CD14-positive monocyte (primary cell): ENCODE measurements at regions of chr4 and their contacts with region 1.

Region 1: DNA sequence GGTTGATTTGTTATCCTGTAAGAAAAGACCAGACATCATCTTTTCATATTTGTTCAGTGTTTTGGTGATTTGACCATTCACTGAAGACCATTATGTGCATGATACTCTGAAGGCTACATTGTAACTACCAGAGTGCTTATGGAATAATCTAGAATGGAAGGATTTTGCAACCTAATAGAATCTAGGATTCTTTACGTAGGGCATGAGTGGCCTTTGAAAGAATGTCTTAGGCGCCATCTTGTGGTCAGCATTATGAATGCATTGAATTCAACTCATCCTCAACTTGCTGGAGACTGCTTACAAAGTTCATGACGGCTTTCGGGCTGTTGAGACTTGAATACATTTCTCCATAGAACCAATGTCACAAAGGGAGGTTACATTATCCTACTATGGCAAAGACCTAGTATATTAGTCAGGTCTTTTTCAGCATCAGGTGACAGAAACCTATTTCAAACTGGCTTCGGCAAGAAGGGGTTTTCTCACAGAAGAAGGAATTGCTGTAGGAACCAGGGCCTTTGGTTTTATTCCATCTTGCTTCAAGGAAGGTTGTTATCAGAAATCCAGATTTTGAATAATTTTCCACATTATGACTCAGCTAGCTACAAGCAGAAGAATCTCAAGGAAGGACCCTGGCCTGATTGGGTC is 104.1 kb downstream of the GPAT3 start:
- DNase-seq: peak; percentile 58 to 80 (median 72)
- H3K4me3 ChIP-seq: no peak overlapping the region
- H3K4me3 Mint-ChIP-seq: peak overlapping the region in 1 of 2 donors; percentile 49
- H3K27ac ChIP-seq: no peak overlapping the region
- H3K27ac Mint-ChIP-seq: no peak overlapping the region
- H3K4me1 ChIP-seq: no peaks in the 10 kb centered on the region
- H3K4me1 Mint-ChIP-seq: peaks cover 7% of the 10 kb centered on the region
- H3K27me3 ChIP-seq: peaks cover 0 to 4% of the 10 kb centered on the region in 2 donors
- H3K27me3 Mint-ChIP-seq: peaks cover 6 to 11% (median 9%) of the 10 kb centered on the region in 3 donors
- CTCF ChIP-seq: peak; percentile 88

Region 2: GRCh38 chr4:83334425-83335241 is 305.3 kb before region 1 on chr4 and contains the start of gene HPSE:
- intact Hi-C with region 1: no loop called
- DNase-seq: peak; percentile 67 to 73 (median 70)
- H3K4me3 ChIP-seq: peak within 1 kb of the TSS; percentile 69 to 86 (median 73)
- H3K4me3 Mint-ChIP-seq: peak within 1 kb of the TSS; percentile 90 to 93
- H3K27ac ChIP-seq: peak within 1 kb of the TSS; percentile 60 to 72
- H3K27ac Mint-ChIP-seq: peak within 1 kb of the TSS; percentile 70 to 92 (median 85)
- H3K4me1 ChIP-seq: peaks cover 53 to 60% of the 10 kb centered on the region in 2 donors
- H3K4me1 Mint-ChIP-seq: peaks cover 57% of the 10 kb centered on the region
- H3K27me3 ChIP-seq: no peaks in the 10 kb centered on the region
- H3K27me3 Mint-ChIP-seq: peaks cover 1 to 6% (median 2%) of the 10 kb centered on the region in 3 donors
- CTCF ChIP-seq: no peak
- polyA plus RNA-seq, gene HPSE: 21.2 to 65.8 (median 31.2) TPM

Region 3: DNA sequence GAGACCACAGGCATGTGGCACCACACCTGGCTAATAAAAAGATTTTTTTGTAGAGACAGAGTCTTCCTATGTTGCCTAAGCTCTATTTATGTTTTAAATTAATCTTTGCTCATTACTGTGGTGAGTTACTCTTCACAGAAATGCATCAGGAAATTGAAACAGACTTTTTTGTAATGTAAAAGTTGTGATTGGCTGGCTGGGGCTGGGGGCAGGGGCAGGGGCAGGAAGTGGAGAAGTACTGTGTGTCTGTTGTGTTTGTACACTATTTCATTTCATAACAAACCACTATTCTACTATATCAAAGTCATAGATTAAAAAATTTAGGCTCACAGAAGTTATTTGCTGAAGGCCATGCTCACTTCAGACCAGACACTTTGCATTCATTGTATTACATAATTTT is 136.0 kb before region 1 on chr4:
- intact Hi-C with region 1: loop called (anchors 1 to 2 kb)
- DNase-seq: no peak
- H3K4me3 ChIP-seq: no peak overlapping the region
- H3K4me3 Mint-ChIP-seq: no peak overlapping the region
- H3K27ac ChIP-seq: no peak overlapping the region
- H3K27ac Mint-ChIP-seq: no peak overlapping the region
- H3K4me1 ChIP-seq: peaks cover 0 to 3% of the 10 kb centered on the region in 2 donors
- H3K4me1 Mint-ChIP-seq: peaks cover 16% of the 10 kb centered on the region
- H3K27me3 ChIP-seq: no peaks in the 10 kb centered on the region
- H3K27me3 Mint-ChIP-seq: peaks cover 0 to 2% (median 0%) of the 10 kb centered on the region in 3 donors
- CTCF ChIP-seq: no peak

Region 4: GRCh38 chr4:83569987-83570386 is 70.0 kb before region 1 on chr4:
- intact Hi-C with region 1: loop called in 1 of 2 experiments (anchors 10 kb)
- DNase-seq: peak; percentile 89 to 97 (median 96)
- H3K4me3 ChIP-seq: peak overlapping the region in 2 of 3 experiments; percentile 48 to 65
- H3K4me3 Mint-ChIP-seq: peak overlapping the region; percentile 62 to 89
- H3K27ac ChIP-seq: peak overlapping the region; percentile 87 to 89
- H3K27ac Mint-ChIP-seq: peak overlapping the region; percentile 91 to 99 (median 98)
- H3K4me1 ChIP-seq: peaks cover 37 to 50% of the 10 kb centered on the region in 2 donors
- H3K4me1 Mint-ChIP-seq: peaks cover 48% of the 10 kb centered on the region
- H3K27me3 ChIP-seq: no peaks in the 10 kb centered on the region
- H3K27me3 Mint-ChIP-seq: peaks cover 0 to 1% (median 0%) of the 10 kb centered on the region in 3 donors
- CTCF ChIP-seq: no peak

Region 5: GRCh38 chr4:83609365-83609764 is 30.6 kb before region 1 on chr4:
- intact Hi-C with region 1: no loop called
- DNase-seq: no peak
- H3K4me3 ChIP-seq: no peak overlapping the region
- H3K4me3 Mint-ChIP-seq: no peak overlapping the region
- H3K27ac ChIP-seq: no peak overlapping the region
- H3K27ac Mint-ChIP-seq: no peak overlapping the region
- H3K4me1 ChIP-seq: peaks cover 10 to 15% of the 10 kb centered on the region in 2 donors
- H3K4me1 Mint-ChIP-seq: peaks cover 15% of the 10 kb centered on the region
- H3K27me3 ChIP-seq: no peaks in the 10 kb centered on the region
- H3K27me3 Mint-ChIP-seq: peaks cover 0 to 4% (median 2%) of the 10 kb centered on the region in 3 donors
- CTCF ChIP-seq: no peak

Region 6: GRCh38 chr4:84503495-84504437 is 863.8 kb after region 1 on chr4:
- intact Hi-C with region 1: loop called in 1 of 2 experiments (anchors 10 kb)
- DNase-seq: peak; percentile 22 to 56 (median 48)
- H3K4me3 ChIP-seq: no peak overlapping the region
- H3K4me3 Mint-ChIP-seq: peak overlapping the region in 1 of 2 donors; percentile 83
- H3K27ac ChIP-seq: no peak overlapping the region
- H3K27ac Mint-ChIP-seq: no peak overlapping the region
- H3K4me1 ChIP-seq: peaks cover 12% of the 10 kb centered on the region in 2 donors
- H3K4me1 Mint-ChIP-seq: peaks cover 22% of the 10 kb centered on the region
- H3K27me3 ChIP-seq: peaks cover 91 to 96% of the 10 kb centered on the region in 2 donors
- H3K27me3 Mint-ChIP-seq: peaks cover 74 to 81% (median 78%) of the 10 kb centered on the region in 3 donors
- CTCF ChIP-seq: peak; percentile 75